MCF 10A (cell line): ENCODE measurements at regions of chr19 and their contacts with region 1.

Region 1: GRCh38 chr19:44653977-44654774 is 10.5 kb downstream of the PVR start:
- DNase-seq: peak; percentile 83
- H3K4me3 Mint-ChIP-seq: no peak overlapping the region
- H3K27ac Mint-ChIP-seq: no peak overlapping the region
- H3K4me1 Mint-ChIP-seq: peaks cover 24% of the 10 kb centered on the region
- H3K27me3 Mint-ChIP-seq: no peaks in the 10 kb centered on the region
- CTCF ChIP-seq: peak; percentile 56

Region 2: DNA sequence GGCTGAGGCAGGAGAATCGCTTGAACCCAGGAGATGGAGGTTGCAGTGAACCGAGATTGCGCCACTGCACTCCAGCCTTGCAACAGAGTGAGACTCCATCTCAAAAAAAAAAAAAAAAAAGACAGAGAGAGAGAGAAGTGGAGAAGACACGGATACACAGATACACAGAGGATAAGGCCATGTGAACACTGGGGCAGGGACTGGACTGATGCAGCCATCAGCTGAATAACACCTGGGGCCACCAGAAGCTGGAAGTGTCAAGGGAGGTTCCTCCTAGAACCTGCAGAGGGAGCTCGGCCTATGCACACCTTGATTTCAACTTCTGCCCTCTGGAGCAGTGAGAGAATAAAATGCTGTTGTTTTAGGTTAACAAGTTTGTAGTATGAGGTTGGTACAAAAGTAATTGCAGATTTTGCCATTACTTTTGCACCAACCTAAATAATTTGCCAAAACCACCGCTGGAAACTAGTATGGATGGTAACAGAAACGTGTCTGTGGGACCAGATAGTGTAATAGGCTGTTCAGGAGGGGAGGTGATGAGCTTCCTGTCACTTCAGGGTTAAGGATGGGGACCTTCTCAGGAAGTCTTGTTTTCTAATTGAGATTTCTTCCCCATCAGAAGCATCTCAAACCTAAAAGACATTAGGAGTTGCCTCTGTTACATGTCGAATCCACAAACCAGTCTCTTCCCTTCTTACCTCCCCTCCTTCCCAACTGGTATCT is 77.2 kb before region 1 on chr19:
- CTCF ChIA-PET with region 1: interaction called, 82 read pairs
- POLR2A ChIA-PET with region 1: no interaction called
- intact Hi-C with region 1: no loop called
- DNase-seq: peak; percentile 78
- H3K4me3 Mint-ChIP-seq: no peak overlapping the region
- H3K27ac Mint-ChIP-seq: no peak overlapping the region
- H3K4me1 Mint-ChIP-seq: no peaks in the 10 kb centered on the region
- H3K27me3 Mint-ChIP-seq: no peaks in the 10 kb centered on the region
- CTCF ChIP-seq: peak; percentile 61

Region 3: GRCh38 chr19:44587963-44588770 is 66.0 kb before region 1 on chr19:
- CTCF ChIA-PET with region 1: interaction called, 20 read pairs
- POLR2A ChIA-PET with region 1: interaction called, 3 read pairs
- intact Hi-C with region 1: loop called (anchors 1 kb)
- DNase-seq: peak; percentile 88
- H3K4me3 Mint-ChIP-seq: peak overlapping the region; percentile 21
- H3K27ac Mint-ChIP-seq: peak overlapping the region; percentile 99
- H3K4me1 Mint-ChIP-seq: peaks cover 25% of the 10 kb centered on the region
- H3K27me3 Mint-ChIP-seq: no peaks in the 10 kb centered on the region
- CTCF ChIP-seq: peak; percentile 52

Region 4: GRCh38 chr19:44643605-44644401 is 10.4 kb before region 1 on chr19 and contains the start of gene PVR:
- CTCF ChIA-PET with region 1: interaction called, 23 read pairs
- POLR2A ChIA-PET with region 1: interaction called, 3 read pairs
- intact Hi-C with region 1: no loop called
- DNase-seq: peak; percentile 82
- H3K4me3 Mint-ChIP-seq: peak within 1 kb of the TSS; percentile 84
- H3K27ac Mint-ChIP-seq: peak within 1 kb of the TSS; percentile 63
- H3K4me1 Mint-ChIP-seq: peaks cover 30% of the 10 kb centered on the region
- H3K27me3 Mint-ChIP-seq: no peaks in the 10 kb centered on the region
- CTCF ChIP-seq: no peak
- total RNA-seq, gene PVR: 140 and 141 TPM in 2 replicates

Region 5: GRCh38 chr19:44770550-44771257 is 116.5 kb after region 1 on chr19:
- CTCF ChIA-PET with region 1: interaction called, 3 read pairs
- POLR2A ChIA-PET with region 1: interaction called, 3 read pairs
- intact Hi-C with region 1: loop called (anchors 1 kb)
- DNase-seq: peak; percentile 99
- H3K4me3 Mint-ChIP-seq: peak overlapping the region; percentile 41
- H3K27ac Mint-ChIP-seq: no peak overlapping the region
- H3K4me1 Mint-ChIP-seq: peaks cover 24% of the 10 kb centered on the region
- H3K27me3 Mint-ChIP-seq: no peaks in the 10 kb centered on the region
- CTCF ChIP-seq: peak; percentile 77

Region 6: DNA sequence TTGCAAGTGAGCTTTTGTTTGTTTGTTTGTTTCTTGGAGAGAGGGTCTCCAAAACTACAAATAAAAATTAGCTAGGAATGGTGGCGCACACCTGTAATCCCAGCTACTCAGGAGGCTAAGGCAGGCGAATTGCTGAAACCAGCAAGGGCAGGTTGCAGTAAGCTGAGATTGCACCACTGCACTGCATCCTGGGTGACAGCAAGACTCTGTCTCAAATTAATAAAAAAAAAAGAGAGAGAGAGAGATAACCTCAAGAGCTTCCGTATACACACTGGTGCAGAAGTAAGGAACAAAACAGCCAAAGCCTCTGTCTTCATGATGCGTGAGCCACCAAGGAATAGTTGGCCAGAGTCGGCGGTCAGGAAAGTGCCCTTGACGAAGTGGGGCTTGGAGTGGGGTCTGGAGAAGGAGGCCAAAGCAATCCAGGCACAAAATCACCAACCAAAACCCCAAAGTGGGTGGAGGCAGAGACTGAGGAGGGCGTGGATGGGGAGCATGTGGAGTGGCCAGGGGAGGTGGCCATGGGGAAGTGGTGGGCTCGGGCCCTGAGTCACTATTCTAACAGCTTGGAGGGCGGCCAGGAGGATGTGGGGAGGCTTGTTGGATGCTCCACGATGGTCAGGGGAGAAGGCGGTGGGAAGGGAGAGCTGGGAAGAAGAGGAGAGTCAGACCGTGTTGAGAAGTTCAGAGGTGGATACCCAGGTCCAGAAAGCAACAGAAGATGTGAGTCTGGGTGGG is 215.7 kb after region 1 on chr19:
- CTCF ChIA-PET with region 1: no interaction called
- POLR2A ChIA-PET with region 1: no interaction called
- intact Hi-C with region 1: no loop called
- DNase-seq: no peak
- H3K4me3 Mint-ChIP-seq: no peak overlapping the region
- H3K27ac Mint-ChIP-seq: no peak overlapping the region
- H3K4me1 Mint-ChIP-seq: peaks cover 17% of the 10 kb centered on the region
- H3K27me3 Mint-ChIP-seq: no peaks in the 10 kb centered on the region
- CTCF ChIP-seq: no peak